Activated CD4-positive, alpha-beta memory T cell treated with anti-CD3 and anti-CD28 coated beads, Interleukin-2, amount 10 ng/mL, durations not matched to agents 7 days and 5 days (primary cell): ENCODE measurements at regions of chr2 and their contacts with region 1.

Region 1: DNA sequence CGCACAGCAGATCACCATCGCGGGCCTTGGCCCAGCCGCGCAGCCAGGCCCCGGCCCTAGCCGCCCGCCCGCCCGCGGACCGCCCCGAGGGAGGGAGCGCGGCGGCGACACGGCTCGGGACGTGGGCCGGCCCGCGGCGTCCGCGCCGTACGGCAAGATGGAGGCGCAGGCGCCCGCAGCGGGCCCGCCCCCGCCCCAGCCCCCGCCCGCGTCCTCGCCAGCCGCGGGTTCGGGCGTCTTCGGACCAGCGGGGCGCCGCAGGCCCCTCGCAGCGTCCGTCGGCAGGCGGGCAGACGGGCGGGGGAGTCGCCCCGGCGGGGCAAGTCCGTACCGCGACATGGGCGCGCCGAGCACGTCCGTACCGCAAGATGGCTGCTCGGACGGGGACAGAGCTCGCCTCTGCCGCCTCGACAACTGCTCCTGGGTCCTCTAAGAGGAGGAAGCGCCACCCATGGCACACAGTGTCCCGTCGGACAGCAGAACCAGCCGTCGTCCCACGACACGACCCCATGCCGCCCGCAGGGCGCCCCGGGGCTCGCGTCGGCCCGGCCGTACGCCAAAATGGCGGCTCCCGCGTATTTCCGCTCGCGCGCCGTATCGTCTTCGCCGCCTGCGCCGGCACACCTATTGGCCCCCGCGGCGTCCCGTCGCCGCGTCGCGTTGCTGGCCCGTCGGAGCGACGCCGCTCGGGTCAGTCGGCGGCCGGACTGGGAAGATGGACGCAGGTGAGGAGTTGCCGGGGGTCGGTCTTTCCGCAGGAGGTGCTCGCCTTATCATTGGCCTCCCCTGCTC is at the starts of genes ATG4B and THAP4:
- DNase-seq: peak; percentile 81
- H3K4me3 Mint-ChIP-seq: peak within 1 kb of the TSS; percentile 89
- H3K27ac Mint-ChIP-seq: peak within 1 kb of the TSS; percentile 85
- H3K4me1 Mint-ChIP-seq: peaks cover 48% of the 10 kb centered on the region
- H3K27me3 Mint-ChIP-seq: no peaks in the 10 kb centered on the region
- total RNA-seq, gene ATG4B: 84.1 to 87.1 TPM
- total RNA-seq, gene THAP4: 31.9 to 34.3 TPM

Region 2: GRCh38 chr2:241617431-241618154 is 19.6 kb before region 1 on chr2:
- CTCF ChIA-PET with region 1: interaction called, 3 read pairs
- POLR2A ChIA-PET with region 1: interaction called, 21 read pairs
- DNase-seq: peak; percentile 58
- H3K4me3 Mint-ChIP-seq: peak overlapping the region; percentile 77
- H3K27ac Mint-ChIP-seq: peak overlapping the region; percentile 95
- H3K4me1 Mint-ChIP-seq: peaks cover 55% of the 10 kb centered on the region
- H3K27me3 Mint-ChIP-seq: no peaks in the 10 kb centered on the region

Region 3: DNA sequence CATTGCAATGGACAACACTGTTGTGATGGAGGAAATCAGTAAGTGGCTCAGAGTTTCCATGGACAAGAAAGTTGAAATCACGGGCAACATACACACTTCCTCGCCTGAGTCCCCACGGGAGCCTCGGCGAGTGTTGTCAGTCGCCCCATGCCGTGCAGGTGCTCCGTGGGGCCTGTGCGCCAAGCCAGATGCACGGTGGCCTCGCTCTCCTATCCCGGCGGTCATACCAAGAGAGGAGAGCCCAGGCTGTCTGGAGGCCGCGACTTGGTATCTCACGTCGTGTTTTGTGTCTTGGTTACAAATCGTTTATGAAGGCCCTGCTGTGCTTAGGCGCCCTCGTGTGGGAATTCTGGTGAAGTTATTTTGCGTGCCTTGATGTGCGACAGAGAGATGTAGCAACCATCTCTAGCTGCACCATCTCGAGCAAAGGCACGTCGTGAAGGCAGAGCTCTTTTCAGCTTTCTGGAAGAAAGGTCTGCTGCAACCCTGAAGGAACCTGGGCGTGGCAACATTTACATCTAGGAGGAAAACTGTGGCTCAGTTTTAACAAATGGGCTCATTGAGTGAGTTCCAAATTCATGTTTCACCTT is 22.0 kb after region 1 on chr2:
- CTCF ChIA-PET with region 1: interaction called, 10 read pairs
- POLR2A ChIA-PET with region 1: interaction called, 7 read pairs
- DNase-seq: peak; percentile 57
- H3K4me3 Mint-ChIP-seq: no peak overlapping the region
- H3K27ac Mint-ChIP-seq: no peak overlapping the region
- H3K4me1 Mint-ChIP-seq: no peaks in the 10 kb centered on the region
- H3K27me3 Mint-ChIP-seq: no peaks in the 10 kb centered on the region

Region 4: DNA sequence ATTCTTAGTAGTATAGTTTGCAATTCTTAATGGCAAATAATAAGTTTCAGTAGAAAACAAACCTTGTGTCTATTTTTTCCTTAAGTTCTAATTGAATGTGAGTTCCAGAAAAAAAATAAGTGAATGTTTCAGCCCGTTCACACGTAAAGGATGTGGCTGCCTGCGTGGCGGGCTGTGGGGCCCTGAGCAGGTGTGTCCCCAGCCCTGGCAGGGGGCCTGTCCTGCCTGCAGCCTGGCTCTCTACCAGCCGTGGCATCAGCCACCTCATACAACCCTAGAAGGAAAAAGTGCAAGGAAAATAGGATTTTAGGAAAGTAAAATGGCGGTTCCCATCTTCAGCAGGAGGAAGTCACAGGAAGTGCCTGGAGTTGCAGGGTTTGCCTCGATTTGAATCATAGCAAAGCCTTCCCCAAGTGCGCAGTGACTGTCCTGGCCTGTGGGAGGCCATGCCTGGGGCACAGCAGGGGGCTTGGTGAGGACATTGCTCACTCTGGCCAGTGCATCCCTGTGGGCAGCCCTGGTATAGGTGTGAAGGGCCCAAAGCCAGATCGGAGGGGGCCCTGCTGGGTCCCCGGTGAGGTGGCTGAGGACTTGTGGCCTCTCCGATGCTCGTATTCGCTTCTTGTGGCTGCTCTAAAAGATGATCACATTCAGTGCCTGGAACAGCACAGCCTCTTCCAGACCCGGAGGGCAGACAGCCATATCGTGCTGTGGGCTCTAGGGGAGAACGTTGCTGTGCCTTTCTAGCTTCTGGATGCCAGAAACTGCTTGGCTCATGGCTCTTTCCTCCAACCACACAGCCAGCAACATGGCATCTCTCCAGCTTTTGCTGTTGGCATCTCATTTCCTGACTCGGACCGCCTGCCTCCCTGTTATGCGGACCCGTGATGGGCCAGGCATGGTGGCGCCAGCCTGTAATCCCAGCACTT is 36.9 kb after region 1 on chr2:
- CTCF ChIA-PET with region 1: no interaction called
- POLR2A ChIA-PET with region 1: no interaction called
- DNase-seq: no peak
- H3K4me3 Mint-ChIP-seq: no peak overlapping the region
- H3K27ac Mint-ChIP-seq: no peak overlapping the region
- H3K4me1 Mint-ChIP-seq: peaks cover 13% of the 10 kb centered on the region
- H3K27me3 Mint-ChIP-seq: no peaks in the 10 kb centered on the region